Psoas muscle (tissue), 8 donors: ENCODE measurements at regions of chr2 and their contacts with region 1.

Region 1: GRCh38 chr2:55609938-55610578 is 7.4 kb downstream of the PPP4R3B start:
- DNase-seq: no peak
- ATAC-seq: peak in 1 of 4 donors; percentile 15
- H3K4me3 ChIP-seq: no peak overlapping the region
- H3K27ac ChIP-seq: no peak overlapping the region
- H3K4me1 ChIP-seq: peaks cover 21% of the 10 kb centered on the region
- H3K27me3 ChIP-seq: no peaks in the 10 kb centered on the region
- CTCF ChIP-seq: no peak

Region 2: DNA sequence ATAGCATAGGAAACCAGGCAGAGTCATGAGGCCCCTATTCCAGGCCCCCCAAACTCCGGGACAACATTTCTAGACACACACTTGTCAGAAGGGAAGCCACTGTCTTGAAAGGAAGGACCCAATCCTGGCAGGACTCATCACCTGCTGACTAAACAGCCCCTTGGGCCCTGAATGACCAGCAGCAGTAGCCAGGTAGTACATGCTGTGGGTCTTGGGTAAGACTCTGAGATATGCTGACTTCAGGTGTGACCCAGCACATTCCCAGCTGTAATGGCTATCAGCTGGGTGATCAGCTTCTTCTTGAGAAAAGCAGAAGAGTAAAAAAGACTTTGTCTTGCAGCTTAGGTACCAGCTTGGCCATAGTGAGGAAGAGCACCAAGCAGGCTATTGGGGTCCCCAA is 413.6 kb before region 1 on chr2:
- intact Hi-C with region 1: no loop called
- DNase-seq: no peak
- ATAC-seq: no peak
- H3K4me3 ChIP-seq: no peak overlapping the region
- H3K27ac ChIP-seq: no peak overlapping the region
- H3K4me1 ChIP-seq: no peaks in the 10 kb centered on the region
- H3K27me3 ChIP-seq: no peaks in the 10 kb centered on the region
- CTCF ChIP-seq: no peak

Region 3: GRCh38 chr2:55565613-55566012 is 44.4 kb before region 1 on chr2:
- intact Hi-C with region 1: no loop called
- DNase-seq: no peak
- ATAC-seq: no peak
- H3K4me3 ChIP-seq: no peak overlapping the region
- H3K27ac ChIP-seq: no peak overlapping the region
- H3K4me1 ChIP-seq: no peaks in the 10 kb centered on the region
- H3K27me3 ChIP-seq: no peaks in the 10 kb centered on the region
- CTCF ChIP-seq: no peak

Region 4: DNA sequence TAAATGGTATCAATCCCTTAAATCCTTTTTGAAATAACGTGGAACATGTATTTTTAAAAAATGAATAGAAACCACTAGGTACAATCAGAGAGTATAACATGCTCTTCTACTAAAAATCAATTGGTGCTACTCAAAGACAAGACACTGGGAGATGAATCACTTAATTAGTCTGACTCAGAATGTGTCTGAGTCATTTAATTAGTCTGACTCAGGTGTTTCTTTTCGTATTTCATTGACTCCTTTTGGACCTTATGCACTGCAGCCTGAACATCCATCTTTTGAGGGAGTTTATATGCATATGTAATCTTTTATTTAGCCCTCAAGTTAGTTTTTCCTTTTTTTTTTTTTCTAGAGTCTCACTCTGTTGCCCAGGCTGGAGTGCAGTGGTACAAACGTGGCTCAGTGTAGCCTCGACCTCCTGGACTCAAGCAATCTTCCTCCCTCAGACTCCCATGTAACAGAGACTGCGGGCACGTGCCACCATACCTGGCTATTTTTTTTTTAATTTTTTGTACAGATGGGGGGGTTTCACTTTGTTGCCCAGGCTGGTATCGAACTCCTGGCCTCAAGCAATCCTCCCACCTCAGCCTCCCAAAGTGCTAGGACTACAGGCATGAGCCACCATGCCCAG is 19.1 kb before region 1 on chr2:
- intact Hi-C with region 1: loop called in 1 of 2 experiments (anchors 2 kb)
- DNase-seq: no peak
- ATAC-seq: peak in 3 of 4 donors; percentile 51 to 83 (median 69)
- H3K4me3 ChIP-seq: no peak overlapping the region
- H3K27ac ChIP-seq: no peak overlapping the region
- H3K4me1 ChIP-seq: peaks cover 7% of the 10 kb centered on the region
- H3K27me3 ChIP-seq: no peaks in the 10 kb centered on the region
- CTCF ChIP-seq: no peak